Activated naive CD4-positive, alpha-beta T cell treated with anti-CD3 and anti-CD28 coated beads for 36 hours (primary cell): ENCODE measurements at regions of chr9 and their contacts with region 1.

Region 1: DNA sequence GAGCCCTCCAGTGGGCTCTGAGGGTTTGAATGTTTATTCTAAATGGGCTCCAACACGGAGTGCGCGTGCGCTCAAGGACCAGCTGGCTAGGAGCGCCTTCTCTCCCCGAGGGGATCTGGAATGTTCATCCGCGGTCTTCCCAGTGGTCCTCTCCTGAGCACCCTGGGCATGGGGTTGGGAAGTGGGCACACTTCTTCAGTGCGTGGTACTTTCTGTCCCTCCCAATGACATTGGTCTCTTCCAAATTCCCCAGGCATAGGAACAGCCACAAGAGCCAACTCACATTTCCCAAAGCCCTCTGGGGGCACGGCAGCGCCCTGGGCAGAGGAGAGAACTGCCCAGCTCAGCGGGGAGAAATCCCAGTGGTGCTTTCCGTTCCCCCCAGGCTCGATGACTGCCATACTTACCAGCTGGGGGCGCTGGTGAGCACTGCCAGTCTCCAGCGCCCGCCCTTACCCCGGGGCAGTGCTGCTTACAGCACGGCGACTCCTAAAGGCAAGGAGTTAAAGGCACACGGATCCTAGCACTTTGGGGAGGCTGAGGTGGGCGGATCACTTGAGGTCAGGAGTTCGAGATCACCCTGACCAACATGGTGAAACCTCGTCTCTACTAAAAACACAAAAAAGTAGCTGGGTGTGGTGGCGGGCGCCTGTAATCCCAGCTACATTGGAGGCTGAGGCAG is 29.9 kb upstream of the OBP2B start:
- DNase-seq: peak; percentile 83
- H3K4me3 Mint-ChIP-seq: peak overlapping the region; percentile 44
- H3K27ac Mint-ChIP-seq: no peak overlapping the region
- H3K4me1 Mint-ChIP-seq: peaks cover 7% of the 10 kb centered on the region
- H3K27me3 Mint-ChIP-seq: peaks cover 21% of the 10 kb centered on the region

Region 2: DNA sequence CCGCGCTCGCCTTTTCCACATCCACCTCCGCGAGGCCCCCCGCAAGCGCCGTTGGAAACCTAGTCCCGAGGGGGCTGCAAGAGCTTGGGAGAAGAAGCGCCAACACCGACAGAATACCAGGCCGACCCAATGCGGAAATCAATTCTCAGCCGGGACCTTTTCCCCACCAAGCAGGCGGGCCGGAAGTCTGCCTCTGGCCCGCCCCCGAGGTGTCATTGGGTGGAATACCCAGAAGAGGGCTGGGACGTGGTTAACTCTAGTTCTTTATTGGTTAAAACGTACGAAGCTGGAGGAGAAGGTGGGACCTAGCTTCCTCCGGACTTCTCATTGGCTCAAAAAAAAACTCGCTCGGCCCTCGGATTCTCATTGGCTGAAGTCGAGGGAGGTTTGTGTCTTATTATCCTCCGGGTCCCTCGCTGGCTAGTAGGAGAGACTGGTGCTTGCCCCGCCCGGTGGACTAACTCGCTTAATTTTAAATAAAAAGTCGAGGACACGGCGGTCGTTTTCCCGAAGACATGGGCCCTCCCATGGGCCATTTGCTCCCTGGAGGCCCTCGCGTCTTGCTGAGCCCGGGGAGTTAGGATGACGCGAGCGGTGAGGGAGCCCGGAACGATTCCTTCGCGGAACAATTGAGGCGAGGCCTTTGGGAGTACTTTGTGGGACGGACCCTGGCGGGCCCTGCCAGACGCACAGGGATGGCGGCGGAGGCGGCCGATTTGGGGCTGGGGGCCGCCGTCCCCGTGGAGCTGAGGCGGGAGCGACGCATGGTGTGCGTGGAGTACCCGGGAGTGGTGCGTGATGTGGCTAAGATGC is 208.5 kb before region 1 on chr9 and contains the start of gene GTF3C5:
- CTCF ChIA-PET with region 1: no interaction called
- intact Hi-C with region 1: no loop called
- DNase-seq: peak; percentile 95
- H3K4me3 Mint-ChIP-seq: peak within 1 kb of the TSS; percentile 98
- H3K27ac Mint-ChIP-seq: peak within 1 kb of the TSS; percentile 98
- H3K4me1 Mint-ChIP-seq: peaks cover 42% of the 10 kb centered on the region
- H3K27me3 Mint-ChIP-seq: no peaks in the 10 kb centered on the region
- total RNA-seq, gene GTF3C5: 102 to 108 TPM

Region 3: GRCh38 chr9:133406480-133407307 is 167.7 kb after region 1 on chr9:
- CTCF ChIA-PET with region 1: no interaction called
- intact Hi-C with region 1: loop called (anchors 2 kb)
- DNase-seq: peak; percentile 84
- H3K4me3 Mint-ChIP-seq: no peak overlapping the region
- H3K27ac Mint-ChIP-seq: peak overlapping the region; percentile 39
- H3K4me1 Mint-ChIP-seq: peaks cover 10% of the 10 kb centered on the region
- H3K27me3 Mint-ChIP-seq: no peaks in the 10 kb centered on the region